ENCODE measurements at regions of chr20 and their contacts with region 1.

Region 1: DNA sequence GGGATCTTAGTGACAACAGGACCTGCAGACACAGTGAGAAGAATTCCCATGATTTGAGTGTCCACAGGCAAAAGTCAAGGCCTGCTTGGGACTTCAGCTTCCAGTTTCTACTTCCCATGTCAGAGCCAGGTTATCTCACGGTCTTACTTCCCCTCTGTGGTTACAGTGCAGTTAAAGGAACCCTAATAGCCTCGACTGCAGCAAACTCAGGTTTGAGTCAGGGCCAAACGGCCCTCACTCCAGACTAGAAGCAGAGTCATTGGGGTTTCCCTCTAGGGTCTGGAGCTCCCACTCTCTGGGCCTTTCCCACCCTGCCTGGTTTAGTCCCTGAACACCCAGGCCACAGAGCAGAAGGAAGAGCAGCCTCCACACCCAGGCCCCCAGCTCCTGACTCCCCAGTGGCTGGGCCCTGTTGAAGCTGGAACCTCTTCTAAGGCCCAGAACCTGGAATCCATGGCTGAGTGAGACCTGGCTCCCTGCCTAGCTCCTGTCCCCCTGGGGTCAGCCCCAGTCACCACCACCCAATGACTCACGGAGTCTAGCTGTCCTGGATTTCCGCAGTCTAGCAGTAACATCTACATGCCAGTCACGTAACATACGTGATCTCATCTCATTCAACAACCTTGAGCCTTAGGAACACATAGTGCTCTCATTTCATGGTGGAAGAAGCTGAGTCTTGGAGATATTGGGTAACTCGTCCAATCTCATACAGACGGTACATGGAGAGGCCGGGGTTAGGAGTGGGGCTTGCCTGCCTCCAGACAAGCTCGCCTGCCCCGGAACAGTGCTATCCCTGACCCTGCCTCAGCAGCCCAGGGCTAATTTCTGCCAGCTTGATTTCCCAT is 9.2 kb upstream of the GHRH start:
- DNase-seq: no peak
- ATAC-seq: no peak
- H3K4me3 ChIP-seq: no peak overlapping the region
- H3K27ac ChIP-seq: no peak overlapping the region
- H3K4me1 ChIP-seq: peaks cover 3 to 13% of the 10 kb centered on the region in 2 experiments
- H3K27me3 ChIP-seq: no peaks in the 10 kb centered on the region
- CTCF ChIP-seq: no peak
- POLR2A ChIP-seq: no peak
- RAD21 ChIP-seq: no peak

Region 2: GRCh38 chr20:37336369-37337207 is 65.8 kb after region 1 on chr20:
- CTCF ChIA-PET with region 1: no interaction called
- POLR2A ChIA-PET with region 1: no interaction called
- RAD21 ChIA-PET with region 1: no interaction called
- intact Hi-C with region 1: no loop called
- DNase-seq: no peak
- ATAC-seq: peak; percentile 46; the same call in 1 of the 2 replicates
- H3K4me3 ChIP-seq: no peak overlapping the region
- H3K27ac ChIP-seq: no peak overlapping the region
- H3K4me1 ChIP-seq: peaks cover 9 to 17% of the 10 kb centered on the region in 2 experiments; a peak in 3 of 4 replicates
- H3K27me3 ChIP-seq: no peaks in the 10 kb centered on the region
- CTCF ChIP-seq: no peak
- POLR2A ChIP-seq: no peak
- RAD21 ChIP-seq: no peak

Region 3: GRCh38 chr20:37384683-37385174 is 113.9 kb after region 1 on chr20:
- CTCF ChIA-PET with region 1: interaction called, 6 read pairs
- POLR2A ChIA-PET with region 1: no interaction called
- RAD21 ChIA-PET with region 1: interaction called in 1 of 2 experiments, 4 read pairs
- intact Hi-C with region 1: loop called (anchors 2 kb)
- DNase-seq: no peak
- ATAC-seq: peak; percentile 64
- H3K4me3 ChIP-seq: 0 out of 4 replicates have a peak overlapping the region, but pooled peaks of 1 of the 2 experiments have one; percentile 18
- H3K27ac ChIP-seq: peak overlapping the region; percentile 56; the same call in 1 of the 2 replicates
- H3K4me1 ChIP-seq: peaks cover 11 to 43% of the 10 kb centered on the region in 2 experiments
- H3K27me3 ChIP-seq: no peaks in the 10 kb centered on the region
- CTCF ChIP-seq: peak in 2 of 3 experiments; percentile 77 to 92; a peak in 5 of 6 replicates
- POLR2A ChIP-seq: no peak
- RAD21 ChIP-seq: peak; percentile 63

Measured in HCT116 (cell line).